Calu3 (cell line): ENCODE measurements at regions of chr3 and their contacts with region 1.

Region 1: DNA sequence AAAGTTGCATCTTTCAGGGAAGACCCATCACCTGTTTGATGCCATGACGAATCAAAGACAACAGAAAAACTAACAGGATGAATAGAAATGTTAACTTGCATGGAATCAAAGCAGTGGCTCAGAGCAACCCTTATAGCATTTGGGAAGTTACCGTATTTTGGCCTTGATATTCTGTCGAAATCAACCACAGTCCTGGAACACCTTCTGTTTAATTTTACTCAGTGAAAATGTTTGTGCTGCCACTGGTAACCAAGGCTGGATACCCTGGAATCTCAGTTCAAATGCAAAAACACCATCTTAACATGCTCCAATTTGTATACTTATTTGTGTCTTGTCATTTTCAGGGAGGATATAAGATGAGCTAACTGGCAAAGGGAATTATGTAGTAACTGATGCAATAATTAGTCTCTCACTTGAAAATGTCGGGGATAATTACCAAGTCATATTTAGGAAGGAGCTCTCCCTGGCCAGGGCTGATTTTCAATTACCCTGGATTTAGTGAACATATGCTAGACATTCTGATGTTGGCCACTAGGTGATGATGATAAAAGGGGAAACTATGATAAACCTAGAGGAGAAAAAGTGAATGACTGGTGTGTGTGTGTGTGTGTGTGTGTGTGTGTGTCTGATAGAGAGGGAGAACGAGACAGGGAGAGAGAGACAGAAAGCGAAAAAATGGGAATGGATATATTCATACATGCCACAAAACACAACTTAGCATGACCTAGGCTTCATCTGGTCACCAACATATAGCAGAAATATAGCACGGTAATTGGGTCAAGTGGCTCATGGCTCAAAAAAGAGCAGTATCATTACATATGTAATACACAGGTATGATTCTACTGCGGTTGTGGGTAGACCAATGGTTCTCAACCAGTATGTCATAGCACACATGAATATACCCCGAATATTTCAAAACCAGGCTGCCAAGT is 19.0 kb upstream of the PRICKLE2 start:
- DNase-seq: peak; percentile 32
- H3K4me3 Mint-ChIP-seq: no peak overlapping the region
- H3K27ac Mint-ChIP-seq: no peak overlapping the region
- H3K4me1 Mint-ChIP-seq: peaks cover 40% of the 10 kb centered on the region
- H3K27me3 Mint-ChIP-seq: no peaks in the 10 kb centered on the region
- CTCF ChIP-seq: peak; percentile 38

Region 2: GRCh38 chr3:64109438-64109837 is 134.8 kb before region 1 on chr3:
- CTCF ChIA-PET with region 1: no interaction called
- intact Hi-C with region 1: no loop called
- DNase-seq: no peak
- H3K4me3 Mint-ChIP-seq: no peak overlapping the region
- H3K27ac Mint-ChIP-seq: no peak overlapping the region
- H3K4me1 Mint-ChIP-seq: no peaks in the 10 kb centered on the region
- H3K27me3 Mint-ChIP-seq: peaks cover 21% of the 10 kb centered on the region
- CTCF ChIP-seq: no peak

Region 3: GRCh38 chr3:64311424-64311976 is 67.2 kb after region 1 on chr3:
- CTCF ChIA-PET with region 1: no interaction called
- intact Hi-C with region 1: no loop called
- DNase-seq: no peak
- H3K4me3 Mint-ChIP-seq: no peak overlapping the region
- H3K27ac Mint-ChIP-seq: no peak overlapping the region
- H3K4me1 Mint-ChIP-seq: no peaks in the 10 kb centered on the region
- H3K27me3 Mint-ChIP-seq: no peaks in the 10 kb centered on the region
- CTCF ChIP-seq: no peak

Region 4: DNA sequence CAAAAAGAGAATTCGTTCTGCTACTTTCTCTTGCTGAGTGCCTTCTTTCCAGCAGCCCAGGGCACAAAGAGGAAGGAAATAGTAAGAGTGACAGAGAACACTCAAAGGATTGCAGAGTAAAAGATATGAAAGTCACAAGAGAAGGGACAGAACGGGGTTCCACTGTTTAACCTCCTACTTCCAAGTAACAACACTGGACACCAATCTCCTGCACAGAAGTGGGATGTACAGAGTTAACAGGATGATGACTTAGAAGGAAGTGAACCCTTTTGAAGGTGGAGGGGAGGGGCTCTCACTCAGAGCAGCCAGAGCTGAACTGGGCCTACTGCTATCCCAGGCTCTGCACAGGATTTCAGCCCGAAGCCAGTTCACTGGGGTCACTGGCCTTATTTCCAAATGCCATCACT is 111.1 kb after region 1 on chr3:
- CTCF ChIA-PET with region 1: no interaction called
- intact Hi-C with region 1: loop called (anchors 10 kb)
- DNase-seq: no peak
- H3K4me3 Mint-ChIP-seq: no peak overlapping the region
- H3K27ac Mint-ChIP-seq: peak overlapping the region; percentile 54
- H3K4me1 Mint-ChIP-seq: peaks cover 24% of the 10 kb centered on the region
- H3K27me3 Mint-ChIP-seq: no peaks in the 10 kb centered on the region
- CTCF ChIP-seq: no peak

Region 5: GRCh38 chr3:64484289-64484992 is 240.2 kb after region 1 on chr3:
- CTCF ChIA-PET with region 1: no interaction called
- intact Hi-C with region 1: loop called (anchors 10 kb)
- DNase-seq: peak; percentile 83
- H3K4me3 Mint-ChIP-seq: no peak overlapping the region
- H3K27ac Mint-ChIP-seq: no peak overlapping the region
- H3K4me1 Mint-ChIP-seq: no peaks in the 10 kb centered on the region
- H3K27me3 Mint-ChIP-seq: peaks cover 25% of the 10 kb centered on the region
- CTCF ChIP-seq: peak; percentile 78